ENCODE measurements at regions of chr13 and their contacts with region 1.

Region 1: DNA sequence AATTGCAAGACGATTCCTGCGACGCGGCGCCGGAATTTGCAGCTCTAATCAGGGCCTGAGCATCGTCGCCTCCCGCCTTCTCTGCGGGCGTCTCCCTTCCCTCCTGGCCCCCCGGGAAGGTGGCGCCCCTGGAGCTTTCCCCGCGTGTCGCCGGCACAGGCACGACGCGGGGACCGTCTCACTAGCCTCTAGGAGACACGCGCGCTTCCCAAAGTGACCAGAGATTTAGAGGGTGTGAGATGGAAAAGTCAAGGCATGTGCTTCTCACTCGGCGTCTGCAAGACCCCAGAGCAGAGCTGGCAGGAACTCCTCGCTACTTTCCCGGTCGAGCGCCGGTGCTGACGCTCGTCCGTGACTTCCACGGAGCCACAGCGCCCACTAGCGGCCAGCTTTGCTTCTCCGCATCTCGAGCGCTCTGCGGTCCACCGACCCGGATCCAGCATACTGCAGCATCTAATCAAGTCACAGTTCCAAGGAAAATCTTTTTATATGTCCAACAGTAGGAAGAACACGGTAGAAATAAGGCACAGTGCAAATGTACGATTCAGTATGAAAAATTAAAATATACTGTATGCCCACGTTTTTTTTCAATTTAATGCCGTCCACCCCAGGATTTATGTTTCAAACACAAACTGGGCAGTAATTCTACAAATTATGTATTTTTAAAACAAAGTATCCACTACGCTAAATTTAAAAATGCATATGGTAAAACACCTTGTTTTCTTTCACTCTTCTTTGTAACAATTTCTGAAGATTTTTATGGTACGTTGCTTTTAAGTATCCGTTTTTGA is 977 bp upstream of the EFNB2 start:
- DNase-seq: peak; percentile 30
- ATAC-seq: peak; percentile 76
- H3K4me3 ChIP-seq: peak overlapping the region; percentile 74
- H3K27ac ChIP-seq: no peak overlapping the region
- H3K4me1 ChIP-seq: peaks cover 3% of the 10 kb centered on the region; the same call in 1 of the 2 replicates
- H3K27me3 ChIP-seq: peaks cover 0 to 17% of the 10 kb centered on the region in 2 experiments; a peak in 2 of 4 replicates
- CTCF ChIP-seq: peak; percentile 97 to 99 (median 98); a peak in 5 of 6 replicates
- EP300 ChIP-seq: no peak
- POLR2A ChIP-seq: 0 out of 2 replicates have a peak, but pooled peaks have one; percentile 24
- RAD21 ChIP-seq: peak; percentile 93

Region 2: GRCh38 chr13:104773775-104774174 is 1762.7 kb before region 1 on chr13:
- CTCF ChIA-PET with region 1: interaction called, 8 read pairs
- POLR2A ChIA-PET with region 1: no interaction called
- RAD21 ChIA-PET with region 1: no interaction called
- SMC1A ChIA-PET with region 1: interaction called, 3 read pairs
- in situ Hi-C with region 1: no loop called
- intact Hi-C with region 1: loop called (anchors 10 kb)
- DNase-seq: peak; percentile 4
- ATAC-seq: peak; percentile 72
- H3K4me3 ChIP-seq: no peak overlapping the region
- H3K27ac ChIP-seq: no peak overlapping the region
- H3K4me1 ChIP-seq: no peaks in the 10 kb centered on the region
- H3K27me3 ChIP-seq: no peaks in the 10 kb centered on the region
- CTCF ChIP-seq: peak; percentile 57 to 70 (median 65); a peak in 5 of 6 replicates
- EP300 ChIP-seq: no peak
- POLR2A ChIP-seq: no peak
- RAD21 ChIP-seq: peak; percentile 85

Region 3: GRCh38 chr13:105410602-105411001 is 1125.8 kb before region 1 on chr13:
- CTCF ChIA-PET with region 1: interaction called, 5 read pairs
- POLR2A ChIA-PET with region 1: no interaction called
- RAD21 ChIA-PET with region 1: no interaction called
- SMC1A ChIA-PET with region 1: no interaction called
- in situ Hi-C with region 1: no loop called
- intact Hi-C with region 1: loop called (anchors 2 kb)
- DNase-seq: no peak
- ATAC-seq: 0 out of 3 replicates have a peak, but pooled peaks have one; percentile 37
- H3K4me3 ChIP-seq: no peak overlapping the region
- H3K27ac ChIP-seq: no peak overlapping the region
- H3K4me1 ChIP-seq: no peaks in the 10 kb centered on the region
- H3K27me3 ChIP-seq: no peaks in the 10 kb centered on the region
- CTCF ChIP-seq: peak; percentile 26 to 36 (median 35); a peak in 5 of 6 replicates
- EP300 ChIP-seq: no peak
- POLR2A ChIP-seq: no peak
- RAD21 ChIP-seq: peak; percentile 40

Region 4: DNA sequence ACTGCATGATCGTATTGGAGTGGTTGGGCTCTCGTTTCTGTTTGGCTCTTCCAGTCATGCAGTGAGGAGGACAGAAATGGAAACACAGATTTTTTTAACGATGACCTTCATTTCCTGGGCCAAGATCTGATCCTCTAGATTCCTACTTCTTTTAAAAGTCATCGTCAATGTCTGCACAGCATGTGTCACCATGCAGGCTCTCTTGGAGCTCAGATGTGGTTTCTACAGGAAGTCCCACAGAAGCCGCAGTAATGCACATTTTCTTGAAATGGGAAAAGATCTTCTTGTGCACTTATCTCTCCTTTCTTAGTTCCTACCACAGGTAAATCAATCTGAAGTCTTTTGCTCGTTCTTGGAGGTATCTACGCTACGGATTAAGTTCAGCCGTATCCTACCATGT is 627.9 kb before region 1 on chr13:
- CTCF ChIA-PET with region 1: no interaction called
- POLR2A ChIA-PET with region 1: no interaction called
- RAD21 ChIA-PET with region 1: no interaction called
- SMC1A ChIA-PET with region 1: no interaction called
- in situ Hi-C with region 1: no loop called
- intact Hi-C with region 1: no loop called
- DNase-seq: no peak
- ATAC-seq: no peak
- H3K4me3 ChIP-seq: no peak overlapping the region
- H3K27ac ChIP-seq: no peak overlapping the region
- H3K4me1 ChIP-seq: no peaks in the 10 kb centered on the region
- H3K27me3 ChIP-seq: no peaks in the 10 kb centered on the region
- CTCF ChIP-seq: no peak
- EP300 ChIP-seq: no peak
- POLR2A ChIP-seq: no peak
- RAD21 ChIP-seq: no peak

Region 5: GRCh38 chr13:106373989-106374572 is 162.4 kb before region 1 on chr13:
- CTCF ChIA-PET with region 1: interaction called, 5 read pairs
- POLR2A ChIA-PET with region 1: no interaction called
- RAD21 ChIA-PET with region 1: interaction called, 4 read pairs
- SMC1A ChIA-PET with region 1: no interaction called
- in situ Hi-C with region 1: no loop called
- intact Hi-C with region 1: loop called (anchors 10 kb)
- DNase-seq: peak; percentile 69
- ATAC-seq: peak; percentile 88
- H3K4me3 ChIP-seq: no peak overlapping the region
- H3K27ac ChIP-seq: peak overlapping the region; percentile 48
- H3K4me1 ChIP-seq: peaks cover 9% of the 10 kb centered on the region; the same call in 1 of the 2 replicates
- H3K27me3 ChIP-seq: no peaks in the 10 kb centered on the region
- CTCF ChIP-seq: no peak
- EP300 ChIP-seq: peak; percentile 57 to 68; a peak in 2 of 4 replicates
- POLR2A ChIP-seq: no peak
- RAD21 ChIP-seq: no peak

Region 6: GRCh38 chr13:106561551-106562170 is 25.2 kb after region 1 on chr13:
- CTCF ChIA-PET with region 1: interaction called, 16 read pairs
- POLR2A ChIA-PET with region 1: interaction called, 3 read pairs
- RAD21 ChIA-PET with region 1: interaction called, 4 read pairs
- SMC1A ChIA-PET with region 1: interaction called, 29 read pairs
- in situ Hi-C with region 1: no loop called
- intact Hi-C with region 1: no loop called
- DNase-seq: peak; percentile 55
- ATAC-seq: peak; percentile 85
- H3K4me3 ChIP-seq: peak overlapping the region; percentile 51; the same call in 1 of the 2 replicates
- H3K27ac ChIP-seq: peak overlapping the region; percentile 7
- H3K4me1 ChIP-seq: peaks cover 13% of the 10 kb centered on the region
- H3K27me3 ChIP-seq: no peaks in the 10 kb centered on the region
- CTCF ChIP-seq: no peak
- EP300 ChIP-seq: no peak
- POLR2A ChIP-seq: peak; percentile 64
- RAD21 ChIP-seq: no peak

Region 7: DNA sequence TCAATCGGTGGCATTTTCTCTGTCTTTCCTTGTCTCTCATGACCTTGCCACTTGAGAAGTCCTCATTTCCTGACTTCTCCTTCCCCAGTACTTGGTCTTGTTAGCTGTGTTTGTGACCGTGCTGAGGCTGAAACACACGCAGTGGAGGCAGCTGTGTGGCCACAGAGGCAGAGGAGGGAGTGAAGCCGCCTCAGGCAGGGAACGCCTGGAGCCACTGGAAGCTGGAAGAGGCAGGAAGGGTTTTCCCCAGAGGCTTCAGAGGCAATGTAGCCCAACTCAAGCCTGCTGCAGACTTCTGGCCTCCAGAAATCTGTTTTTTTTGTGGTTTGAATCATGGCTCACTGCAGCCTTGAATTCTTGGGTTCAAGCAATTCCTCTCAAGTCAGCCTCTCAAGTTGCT is 60.7 kb after region 1 on chr13:
- CTCF ChIA-PET with region 1: no interaction called
- POLR2A ChIA-PET with region 1: no interaction called
- RAD21 ChIA-PET with region 1: no interaction called
- SMC1A ChIA-PET with region 1: no interaction called
- in situ Hi-C with region 1: no loop called
- intact Hi-C with region 1: no loop called
- DNase-seq: no peak
- ATAC-seq: no peak
- H3K4me3 ChIP-seq: no peak overlapping the region
- H3K27ac ChIP-seq: no peak overlapping the region
- H3K4me1 ChIP-seq: no peaks in the 10 kb centered on the region
- H3K27me3 ChIP-seq: no peaks in the 10 kb centered on the region
- CTCF ChIP-seq: no peak
- EP300 ChIP-seq: no peak
- POLR2A ChIP-seq: no peak
- RAD21 ChIP-seq: no peak

Region 8: DNA sequence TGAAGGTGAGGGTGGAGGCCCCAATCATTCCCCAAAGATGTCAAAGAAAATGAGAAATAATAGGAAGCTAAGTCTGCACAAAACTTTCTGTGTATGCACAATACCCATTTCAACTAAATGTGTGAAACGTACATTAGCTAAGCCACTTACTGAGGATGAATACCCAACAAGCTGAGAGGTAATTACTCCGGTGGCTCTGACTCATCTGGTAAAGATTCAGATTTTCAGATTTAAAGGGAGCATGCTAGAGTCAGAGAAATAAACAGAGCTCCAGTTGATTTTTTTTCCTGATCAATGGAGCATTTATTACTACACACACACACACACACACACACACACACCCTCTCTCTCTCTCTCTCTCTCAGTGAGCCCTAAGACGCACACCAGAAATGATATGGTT is 226.3 kb after region 1 on chr13:
- CTCF ChIA-PET with region 1: no interaction called
- POLR2A ChIA-PET with region 1: no interaction called
- RAD21 ChIA-PET with region 1: no interaction called
- SMC1A ChIA-PET with region 1: no interaction called
- in situ Hi-C with region 1: no loop called
- intact Hi-C with region 1: no loop called
- DNase-seq: no peak
- ATAC-seq: no peak
- H3K4me3 ChIP-seq: no peak overlapping the region
- H3K27ac ChIP-seq: no peak overlapping the region
- H3K4me1 ChIP-seq: no peaks in the 10 kb centered on the region
- H3K27me3 ChIP-seq: no peaks in the 10 kb centered on the region
- CTCF ChIP-seq: no peak
- EP300 ChIP-seq: no peak
- POLR2A ChIP-seq: no peak
- RAD21 ChIP-seq: no peak

Region 9: GRCh38 chr13:106917673-106918556 is 381.5 kb after region 1 on chr13:
- CTCF ChIA-PET with region 1: interaction called, 4 read pairs
- POLR2A ChIA-PET with region 1: no interaction called
- RAD21 ChIA-PET with region 1: no interaction called
- SMC1A ChIA-PET with region 1: no interaction called
- in situ Hi-C with region 1: no loop called
- intact Hi-C with region 1: loop called (anchors 5 kb)
- DNase-seq: no peak
- ATAC-seq: peak; percentile 99
- H3K4me3 ChIP-seq: peak overlapping the region; percentile 52; the same call in 1 of the 2 replicates
- H3K27ac ChIP-seq: no peak overlapping the region
- H3K4me1 ChIP-seq: no peaks in the 10 kb centered on the region
- H3K27me3 ChIP-seq: no peaks in the 10 kb centered on the region
- CTCF ChIP-seq: peak; percentile 80 to 89 (median 88)
- EP300 ChIP-seq: no peak
- POLR2A ChIP-seq: 0 out of 2 replicates have a peak, but pooled peaks have one; percentile 16
- RAD21 ChIP-seq: peak; percentile 69